Heart left ventricle (tissue), 16 donors: ENCODE measurements at regions of chr6 and their contacts with region 1.

Region 1: GRCh38 chr6:27374824-27375612 is 13.5 kb upstream of the ZNF391 start:
- DNase-seq: peak; percentile 74 to 86 (median 83)
- ATAC-seq: peak; percentile 99 to 100 (median 100)
- H3K4me3 ChIP-seq: peak overlapping the region; percentile 42 to 89 (median 66)
- H3K27ac ChIP-seq: peak overlapping the region in 7 of 12 donors; percentile 21 to 67 (median 44)
- H3K4me1 ChIP-seq: peaks cover 0 to 19% (median 5%) of the 10 kb centered on the region in 12 donors
- H3K27me3 ChIP-seq: peaks cover 0 to 8% (median 0%) of the 10 kb centered on the region in 9 donors
- CTCF ChIP-seq: no peak
- POLR2A ChIP-seq: no peak

Region 2: DNA sequence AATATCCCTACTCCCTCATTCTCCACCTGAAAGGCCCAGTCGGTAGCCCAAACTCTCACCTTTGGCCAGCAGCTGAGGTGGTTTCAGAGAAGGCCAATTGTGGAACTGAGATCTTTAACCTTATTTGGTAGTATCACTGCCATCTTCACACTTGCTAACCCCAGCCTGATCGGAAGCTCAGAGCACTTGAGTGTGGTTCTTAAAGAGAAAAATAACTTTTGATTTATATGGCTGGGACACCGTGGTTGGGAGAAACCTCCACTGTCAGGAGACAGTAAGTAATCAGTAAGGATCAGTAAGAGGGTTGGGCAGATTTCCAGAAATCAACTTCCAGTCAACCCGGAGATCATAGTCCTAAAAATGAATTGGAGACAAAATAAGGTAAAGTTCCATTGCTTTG is 150.3 kb before region 1 on chr6:
- intact Hi-C with region 1: no loop called
- DNase-seq: no peak
- ATAC-seq: no peak
- H3K4me3 ChIP-seq: no peak overlapping the region
- H3K27ac ChIP-seq: no peak overlapping the region
- H3K4me1 ChIP-seq: no peaks in the 10 kb centered on the region
- H3K27me3 ChIP-seq: peaks cover 0 to 74% (median 27%) of the 10 kb centered on the region in 9 donors
- CTCF ChIP-seq: no peak
- POLR2A ChIP-seq: no peak

Region 3: GRCh38 chr6:27472617-27473400 is 97.8 kb after region 1 on chr6 and contains the start of gene ZNF184:
- intact Hi-C with region 1: loop called in 1 of 10 experiments (anchors 10 kb)
- DNase-seq: peak; percentile 95 to 96 (median 96)
- ATAC-seq: peak; percentile 99 to 100 (median 100)
- H3K4me3 ChIP-seq: peak within 1 kb of the TSS; percentile 52 to 99 (median 86)
- H3K27ac ChIP-seq: peak within 1 kb of the TSS; percentile 34 to 92 (median 86)
- H3K4me1 ChIP-seq: peaks cover 0 to 37% (median 19%) of the 10 kb centered on the region in 12 donors
- H3K27me3 ChIP-seq: no peaks in the 10 kb centered on the region
- CTCF ChIP-seq: peak in 3 of 12 donors; percentile 2 to 29 (median 24)
- POLR2A ChIP-seq: peak in 1 of 2 donors; percentile 78
- total RNA-seq, gene ZNF184: 3.2 to 6.5 (median 4.0) TPM